Esophagus muscularis mucosa (tissue), 4 donors: ENCODE measurements at regions of chr9 and their contacts with region 1.

Region 1: DNA sequence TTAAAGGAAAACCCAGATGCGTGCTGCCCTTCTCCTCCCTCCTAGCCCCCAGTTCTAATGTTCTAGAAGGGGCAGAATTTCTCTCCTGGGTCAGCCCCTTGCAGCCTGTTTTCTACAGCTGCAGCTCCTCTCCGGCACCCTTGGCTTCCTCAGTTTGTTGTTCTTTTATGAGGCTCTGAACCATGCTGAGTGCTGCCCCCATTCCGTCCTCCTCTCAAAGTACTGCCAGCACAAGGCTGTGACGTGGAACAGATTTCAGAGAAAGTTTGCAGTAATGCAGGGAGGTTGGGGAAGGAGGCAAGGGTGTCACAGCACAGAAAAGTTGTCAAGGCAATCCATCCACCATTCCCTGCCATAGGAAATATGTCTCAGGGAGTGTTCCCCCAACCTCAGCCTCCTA is 63.3 kb downstream of the RGS3 start:
- DNase-seq: no peak
- H3K4me3 ChIP-seq: no peak overlapping the region
- H3K27ac ChIP-seq: peak overlapping the region; percentile 67 to 83 (median 70)
- H3K4me1 ChIP-seq: peaks cover 66 to 79% (median 72%) of the 10 kb centered on the region in 4 donors
- H3K27me3 ChIP-seq: no peaks in the 10 kb centered on the region
- CTCF ChIP-seq: no peak
- EP300 ChIP-seq: no peak
- POLR2A ChIP-seq: no peak

Region 2: GRCh38 chr9:113564498-113565237 is 37.8 kb after region 1 on chr9:
- intact Hi-C with region 1: loop called (anchors 5 kb)
- DNase-seq: no peak
- H3K4me3 ChIP-seq: peak overlapping the region; percentile 52 to 57 (median 56)
- H3K27ac ChIP-seq: peak overlapping the region; percentile 77 to 92 (median 90)
- H3K4me1 ChIP-seq: peaks cover 77 to 84% (median 78%) of the 10 kb centered on the region in 4 donors
- H3K27me3 ChIP-seq: no peaks in the 10 kb centered on the region
- CTCF ChIP-seq: no peak
- EP300 ChIP-seq: no peak
- POLR2A ChIP-seq: no peak

Region 3: GRCh38 chr9:113695901-113696300 is 169.1 kb after region 1 on chr9:
- intact Hi-C with region 1: no loop called
- DNase-seq: no peak
- H3K4me3 ChIP-seq: no peak overlapping the region
- H3K27ac ChIP-seq: no peak overlapping the region
- H3K4me1 ChIP-seq: no peaks in the 10 kb centered on the region
- H3K27me3 ChIP-seq: peaks cover 0 to 41% (median 0%) of the 10 kb centered on the region in 4 donors
- CTCF ChIP-seq: no peak
- EP300 ChIP-seq: no peak
- POLR2A ChIP-seq: no peak